Sigmoid colon (tissue), 7 donors: ENCODE measurements at regions of chr3 and their contacts with region 1.

Region 1: GRCh38 chr3:45760878-45761711 is 35.2 kb downstream of the SLC6A20 start:
- DNase-seq: peak; percentile 82
- H3K4me3 ChIP-seq: no peak overlapping the region
- H3K27ac ChIP-seq: no peak overlapping the region
- H3K4me1 ChIP-seq: peaks cover 0 to 5% (median 0%) of the 10 kb centered on the region in 4 donors
- H3K27me3 ChIP-seq: no peaks in the 10 kb centered on the region
- CTCF ChIP-seq: peak; percentile 19 to 76 (median 66)
- EP300 ChIP-seq: no peak
- POLR2A ChIP-seq: no peak

Region 2: DNA sequence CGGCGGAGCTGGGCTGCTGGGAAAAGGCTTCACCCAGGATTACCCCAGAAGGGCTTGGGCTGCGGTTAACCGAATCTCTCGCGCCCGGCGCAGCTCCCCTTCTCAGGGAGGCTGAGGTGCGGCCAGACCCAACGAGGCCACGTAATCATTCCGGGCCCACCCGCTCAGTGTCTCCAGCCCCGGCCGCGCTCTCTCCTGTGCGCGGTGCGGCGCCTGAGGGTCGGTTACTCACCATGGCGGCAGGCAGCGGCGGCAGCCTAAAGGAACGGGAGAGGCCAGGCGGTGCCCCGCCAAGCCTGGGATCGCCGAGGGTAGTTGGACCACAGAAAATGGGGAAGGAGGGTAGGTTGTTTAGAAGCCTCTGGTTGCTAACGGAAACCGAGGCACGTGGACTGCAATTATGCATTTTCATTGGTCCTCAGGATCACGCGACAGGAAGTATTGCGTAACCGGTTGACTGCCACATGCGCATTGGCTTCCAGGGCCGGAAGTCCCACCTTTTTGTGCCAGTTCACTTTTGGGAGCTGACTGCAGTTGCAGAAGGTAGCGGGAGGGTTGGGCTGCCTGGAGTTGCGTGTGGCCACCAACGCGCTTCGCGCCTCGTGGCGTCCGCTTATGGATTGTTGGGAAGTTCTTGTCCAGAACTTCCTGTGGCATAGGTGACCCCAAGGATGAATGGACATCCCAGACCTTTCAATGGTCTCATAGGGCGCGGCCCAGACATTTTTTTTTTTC is 80.8 kb after region 1 on chr3 and contains the start of gene LZTFL1:
- intact Hi-C with region 1: loop called (anchors 5 kb)
- DNase-seq: peak; percentile 97
- H3K4me3 ChIP-seq: peak within 1 kb of the TSS; percentile 68 to 86 (median 70)
- H3K27ac ChIP-seq: peak within 1 kb of the TSS; percentile 48 to 77 (median 64)
- H3K4me1 ChIP-seq: peaks cover 0 to 11% (median 11%) of the 10 kb centered on the region in 4 donors
- H3K27me3 ChIP-seq: no peaks in the 10 kb centered on the region
- CTCF ChIP-seq: no peak
- EP300 ChIP-seq: no peak
- POLR2A ChIP-seq: no peak
- total RNA-seq, gene LZTFL1: 16.6 to 31.0 (median 17.8) TPM

Region 3: GRCh38 chr3:46078712-46079400 is 317.8 kb after region 1 on chr3:
- intact Hi-C with region 1: loop called (anchors 1 kb)
- DNase-seq: peak; percentile 95
- H3K4me3 ChIP-seq: peak overlapping the region in 1 of 4 donors; percentile 26
- H3K27ac ChIP-seq: no peak overlapping the region
- H3K4me1 ChIP-seq: peaks cover 0 to 5% (median 0%) of the 10 kb centered on the region in 4 donors
- H3K27me3 ChIP-seq: no peaks in the 10 kb centered on the region
- CTCF ChIP-seq: peak; percentile 94 to 99 (median 99)
- EP300 ChIP-seq: no peak
- POLR2A ChIP-seq: no peak

Region 4: GRCh38 chr3:46442576-46443562 is 681.8 kb after region 1 on chr3:
- intact Hi-C with region 1: loop called (anchors 10 kb)
- DNase-seq: no peak
- H3K4me3 ChIP-seq: no peak overlapping the region
- H3K27ac ChIP-seq: no peak overlapping the region
- H3K4me1 ChIP-seq: no peaks in the 10 kb centered on the region
- H3K27me3 ChIP-seq: no peaks in the 10 kb centered on the region
- CTCF ChIP-seq: peak in 2 of 4 experiments; percentile 66 to 72
- EP300 ChIP-seq: no peak
- POLR2A ChIP-seq: no peak